ENCODE measurements at regions of chr3 and their contacts with region 1.

Region 1: GRCh38 chr3:56801662-56802377 is at the start of gene ARHGEF3:
- DNase-seq: peak; percentile 93
- CTCF ChIP-seq: peak; percentile 51

Region 2: DNA sequence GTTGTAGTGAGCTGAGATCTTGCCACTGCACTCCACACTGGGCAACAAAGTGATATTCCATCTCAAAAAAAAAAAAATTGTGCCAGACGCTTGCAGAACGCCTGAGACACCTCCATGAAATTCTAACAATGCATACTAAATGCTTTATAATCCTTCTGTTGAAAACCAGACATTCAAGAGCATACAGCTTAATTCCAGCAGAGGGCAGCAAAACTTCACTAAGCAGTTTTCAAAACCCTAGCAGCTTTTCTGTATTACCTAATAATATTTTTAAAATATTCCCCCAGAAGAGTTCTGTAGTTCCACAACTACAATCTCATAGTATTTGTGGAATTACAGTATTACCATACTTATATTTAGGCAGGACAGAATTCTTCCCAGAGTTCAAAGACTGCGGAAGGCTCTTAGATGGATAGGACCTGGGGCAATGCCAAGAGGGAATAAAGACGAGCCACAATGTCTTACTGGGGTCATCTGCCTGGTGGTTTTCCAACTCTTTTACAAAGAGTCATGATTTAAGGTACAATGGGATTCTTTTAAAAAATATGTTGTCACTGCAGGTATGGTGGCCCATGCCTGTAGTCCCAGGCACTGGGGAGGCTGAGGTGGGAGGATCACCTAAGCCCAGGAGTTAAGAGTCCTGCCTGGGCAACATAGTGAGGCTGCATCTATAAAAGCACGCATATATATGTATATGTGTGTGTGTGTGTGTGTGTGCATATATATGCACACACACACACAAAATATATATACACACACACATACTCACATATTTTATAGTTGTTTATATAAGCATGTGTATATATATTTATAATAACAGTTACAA is 99.1 kb before region 1 on chr3:
- CTCF ChIA-PET with region 1: interaction called, 213 read pairs
- POLR2A ChIA-PET with region 1: no interaction called
- DNase-seq: peak; percentile 61
- CTCF ChIP-seq: peak; percentile 67

Region 3: DNA sequence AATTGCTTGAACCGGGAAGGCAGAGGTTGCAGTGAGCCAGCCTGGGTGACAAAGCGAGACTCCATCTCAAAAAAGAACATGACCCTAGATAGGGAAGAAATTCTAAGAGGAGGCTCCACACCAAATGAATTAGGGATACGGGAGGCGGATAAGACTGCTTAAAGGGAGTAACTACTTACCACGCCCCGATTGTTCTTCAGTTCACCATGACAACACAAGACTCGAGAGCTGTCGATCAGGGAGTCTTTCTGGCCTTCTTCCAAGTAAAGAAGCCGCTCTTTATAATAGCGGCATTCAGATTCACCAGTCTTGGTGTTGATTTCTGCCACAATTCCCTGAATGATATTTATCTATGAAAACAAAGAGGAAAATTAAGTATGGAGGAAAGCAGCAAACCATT is 64.8 kb before region 1 on chr3:
- CTCF ChIA-PET with region 1: interaction called, 25 read pairs
- POLR2A ChIA-PET with region 1: interaction called, 3 read pairs
- DNase-seq: no peak
- CTCF ChIP-seq: no peak

Region 4: GRCh38 chr3:56783644-56784447 is 18.0 kb before region 1 on chr3:
- CTCF ChIA-PET with region 1: interaction called, 293 read pairs
- POLR2A ChIA-PET with region 1: no interaction called
- DNase-seq: peak; percentile 83
- CTCF ChIP-seq: no peak

Region 5: DNA sequence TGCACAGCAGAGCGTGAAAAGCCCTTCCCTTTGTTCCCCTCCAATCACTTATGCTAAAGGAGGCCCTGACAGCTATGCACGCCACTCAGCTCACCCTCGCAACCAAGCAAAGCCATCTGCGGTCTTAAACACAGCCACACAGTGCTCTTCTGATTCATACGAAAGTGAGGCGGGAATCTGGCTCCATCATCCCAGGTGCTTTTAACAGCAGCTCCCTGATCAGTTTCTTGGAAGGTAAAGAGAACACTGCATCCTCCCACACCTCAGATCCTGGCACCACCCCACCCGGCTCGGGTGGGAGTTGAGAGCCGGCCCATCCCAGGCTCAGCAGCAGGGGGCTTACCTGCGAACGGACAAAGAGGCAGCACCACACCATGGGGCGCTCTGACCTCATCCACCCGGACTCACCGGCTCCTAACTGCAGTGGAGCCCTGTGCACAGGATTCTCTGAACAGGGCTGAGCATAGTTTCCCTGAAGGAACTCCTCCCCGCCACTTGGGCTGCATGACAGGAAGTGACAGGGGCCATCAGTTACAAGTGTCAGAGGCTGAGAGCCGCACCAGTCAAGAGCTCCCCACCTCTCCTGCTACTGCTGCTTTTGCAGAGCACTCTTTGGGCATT is 114.3 kb after region 1 on chr3:
- CTCF ChIA-PET with region 1: interaction called, 14 read pairs
- POLR2A ChIA-PET with region 1: no interaction called
- DNase-seq: peak; percentile 60
- CTCF ChIP-seq: no peak

Region 6: DNA sequence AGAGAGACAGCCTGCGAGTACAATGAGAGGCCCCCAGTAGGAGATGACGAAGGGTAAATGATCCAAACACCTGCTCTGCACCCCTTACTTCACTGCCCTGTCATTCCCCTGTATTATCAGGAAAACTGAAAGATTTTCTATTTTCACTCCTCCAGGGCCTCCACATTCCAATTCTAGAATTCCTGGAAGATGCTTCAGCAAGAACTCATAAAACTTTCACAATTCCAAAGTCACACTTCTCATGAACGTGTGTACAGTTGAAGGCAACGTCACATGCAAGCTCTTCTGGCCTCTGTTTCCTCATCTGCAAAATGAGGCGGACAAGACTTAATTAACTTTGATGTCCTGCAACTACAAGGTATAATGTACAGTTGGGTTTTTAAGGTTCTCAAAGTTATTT is 195.9 kb after region 1 on chr3:
- CTCF ChIA-PET with region 1: interaction called, 10 read pairs
- POLR2A ChIA-PET with region 1: interaction called, 5 read pairs
- DNase-seq: no peak
- CTCF ChIP-seq: no peak

Region 7: GRCh38 chr3:57079474-57079831 is 277.6 kb after region 1 on chr3:
- CTCF ChIA-PET with region 1: no interaction called
- POLR2A ChIA-PET with region 1: no interaction called
- DNase-seq: no peak
- CTCF ChIP-seq: no peak

Region 8: GRCh38 chr3:57164657-57165573 is 363.1 kb after region 1 on chr3 and contains the start of gene IL17RD:
- CTCF ChIA-PET with region 1: no interaction called
- POLR2A ChIA-PET with region 1: no interaction called
- DNase-seq: peak; percentile 88
- CTCF ChIP-seq: no peak